ENCODE measurements at regions of chr3 and their contacts with region 1.

Region 1: DNA sequence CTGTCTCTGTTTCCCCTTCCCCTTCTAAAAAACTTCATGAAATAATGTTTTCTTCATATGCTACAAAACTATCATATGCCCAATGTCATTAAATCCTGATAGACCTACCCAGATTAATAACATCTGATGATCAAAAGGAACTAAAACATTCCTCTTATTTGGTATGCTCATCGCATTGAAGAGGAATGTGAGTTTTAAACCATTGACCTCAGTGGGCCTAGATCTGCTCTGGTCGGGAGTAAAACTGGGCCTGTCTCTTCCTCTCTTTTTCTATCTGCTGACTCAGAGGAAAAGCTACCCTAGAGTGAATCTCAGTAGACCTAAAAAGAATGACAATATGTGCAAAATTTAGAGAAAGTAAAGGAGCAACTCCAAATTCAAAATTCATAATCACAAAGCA is 275.8 kb downstream of the SATB1 start:
- DNase-seq: no peak
- ATAC-seq: no peak
- H3K4me3 ChIP-seq: no peak overlapping the region
- H3K4me3 Mint-ChIP-seq: no peak overlapping the region
- H3K27ac ChIP-seq: no peak overlapping the region
- H3K27ac Mint-ChIP-seq: no peak overlapping the region
- H3K4me1 ChIP-seq: no peaks in the 10 kb centered on the region
- H3K4me1 Mint-ChIP-seq: no peaks in the 10 kb centered on the region
- H3K27me3 ChIP-seq: no peaks in the 10 kb centered on the region
- H3K27me3 Mint-ChIP-seq: peaks cover 0 to 6% of the 10 kb centered on the region in 2 donors

Region 2: DNA sequence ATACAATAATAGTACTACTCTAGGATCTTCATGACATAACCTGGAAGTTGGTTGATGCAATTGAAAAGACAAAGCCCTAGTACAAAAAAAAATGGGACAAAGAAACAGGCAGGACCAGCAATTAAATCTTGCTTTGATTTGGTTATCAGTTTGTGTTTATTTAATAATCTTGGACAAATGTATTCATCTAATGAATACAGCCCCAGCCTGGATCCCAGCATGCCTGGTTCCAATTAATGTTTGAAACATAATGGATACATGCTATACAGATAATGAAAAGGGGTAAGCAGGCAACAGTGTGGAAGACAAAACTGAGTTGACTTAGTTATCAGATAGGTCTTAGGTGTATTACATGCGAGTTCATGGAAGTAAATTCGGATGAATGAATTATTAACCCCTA is 305.4 kb after region 1 on chr3:
- CTCF ChIA-PET with region 1: no interaction called
- POLR2A ChIA-PET with region 1: interaction called in 1 of 2 experiments, 13 read pairs
- DNase-seq: no peak
- ATAC-seq: no peak
- H3K4me3 ChIP-seq: no peak overlapping the region
- H3K4me3 Mint-ChIP-seq: no peak overlapping the region
- H3K27ac ChIP-seq: no peak overlapping the region
- H3K27ac Mint-ChIP-seq: no peak overlapping the region
- H3K4me1 ChIP-seq: peaks cover 0 to 11% of the 10 kb centered on the region in 2 experiments
- H3K4me1 Mint-ChIP-seq: peaks cover 50 to 66% (median 55%) of the 10 kb centered on the region in 3 donors
- H3K27me3 ChIP-seq: no peaks in the 10 kb centered on the region
- H3K27me3 Mint-ChIP-seq: no peaks in the 10 kb centered on the region

Measured in T-cell (primary cell).